Vagina (tissue), 2 donors: ENCODE measurements at regions of chr3 and their contacts with region 1.

Region 1: DNA sequence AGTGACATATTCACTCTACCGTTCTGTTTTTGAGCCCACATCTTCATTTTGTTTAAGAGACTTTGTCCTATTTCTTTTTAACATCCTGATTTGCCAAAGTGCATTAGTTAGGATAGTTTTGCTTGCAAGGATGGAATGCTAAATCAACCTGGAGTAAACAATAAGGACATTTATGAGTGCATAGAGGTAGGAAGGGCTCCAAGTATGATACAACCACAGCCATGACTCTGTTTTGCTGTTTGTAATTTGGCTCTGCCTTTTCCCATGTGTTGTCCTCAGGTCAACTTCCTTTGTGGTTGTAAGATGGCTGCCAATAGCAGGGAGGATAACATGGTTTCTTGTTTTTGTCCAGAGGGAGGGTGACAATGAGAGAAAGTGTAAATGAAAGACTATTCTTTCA is 66.4 kb upstream of the GOLIM4 start:
- DNase-seq: no peak
- H3K4me3 ChIP-seq: no peak overlapping the region
- H3K27ac ChIP-seq: peak overlapping the region; percentile 28
- H3K4me1 ChIP-seq: peaks cover 14% of the 10 kb centered on the region
- H3K27me3 ChIP-seq: no peaks in the 10 kb centered on the region
- CTCF ChIP-seq: no peak
- POLR2A ChIP-seq: no peak

Region 2: DNA sequence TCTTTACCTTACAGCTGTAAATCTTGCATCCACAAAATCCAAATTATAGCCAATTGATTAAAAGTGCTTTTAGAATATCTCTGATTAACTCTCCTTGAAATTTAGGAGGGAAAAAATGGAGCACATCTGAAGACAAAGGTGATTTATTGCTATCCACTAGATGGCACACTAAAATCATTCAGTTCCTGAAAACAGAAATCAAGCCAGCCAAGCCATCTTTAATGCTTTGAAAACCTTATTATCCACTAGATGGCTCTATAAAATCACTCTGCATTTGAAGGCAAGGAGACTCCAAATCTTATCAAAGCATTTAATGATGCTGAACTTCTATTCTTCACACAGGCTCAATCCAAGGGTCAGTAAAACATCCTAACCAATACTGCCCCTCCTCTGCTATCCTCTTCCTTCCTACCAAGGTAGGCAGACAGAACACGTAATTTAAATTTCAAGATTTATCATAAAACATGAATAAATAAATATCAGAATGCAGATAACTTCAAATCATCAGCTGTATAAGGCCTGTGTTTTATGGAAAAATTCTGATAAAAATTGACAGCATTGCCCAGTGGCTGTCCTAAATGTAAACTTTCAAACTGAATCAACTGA is 114.9 kb before region 1 on chr3:
- intact Hi-C with region 1: loop called (anchors 5 kb)
- DNase-seq: no peak
- H3K4me3 ChIP-seq: no peak overlapping the region
- H3K27ac ChIP-seq: no peak overlapping the region
- H3K4me1 ChIP-seq: peaks cover 17% of the 10 kb centered on the region
- H3K27me3 ChIP-seq: no peaks in the 10 kb centered on the region
- CTCF ChIP-seq: peak; percentile 83 to 87 (median 84)
- POLR2A ChIP-seq: no peak

Region 3: GRCh38 chr3:168095611-168096209 is 66.5 kb before region 1 on chr3 and contains the start of gene GOLIM4:
- intact Hi-C with region 1: loop called (anchors 5 kb)
- DNase-seq: peak in 1 of 2 donors; percentile 97
- H3K4me3 ChIP-seq: peak within 1 kb of the TSS; percentile 67 to 82
- H3K27ac ChIP-seq: peak within 1 kb of the TSS; percentile 85
- H3K4me1 ChIP-seq: peaks cover 44% of the 10 kb centered on the region
- H3K27me3 ChIP-seq: no peaks in the 10 kb centered on the region
- CTCF ChIP-seq: no peak
- POLR2A ChIP-seq: peak in 1 of 2 donors; percentile 48
- total RNA-seq, gene GOLIM4: 36.8 TPM

Region 4: GRCh38 chr3:168249550-168250414 is 87.6 kb after region 1 on chr3:
- intact Hi-C with region 1: no loop called
- DNase-seq: no peak
- H3K4me3 ChIP-seq: peak overlapping the region; percentile 49 to 66
- H3K27ac ChIP-seq: no peak overlapping the region
- H3K4me1 ChIP-seq: peaks cover 25% of the 10 kb centered on the region
- H3K27me3 ChIP-seq: no peaks in the 10 kb centered on the region
- CTCF ChIP-seq: no peak
- POLR2A ChIP-seq: no peak

Region 5: DNA sequence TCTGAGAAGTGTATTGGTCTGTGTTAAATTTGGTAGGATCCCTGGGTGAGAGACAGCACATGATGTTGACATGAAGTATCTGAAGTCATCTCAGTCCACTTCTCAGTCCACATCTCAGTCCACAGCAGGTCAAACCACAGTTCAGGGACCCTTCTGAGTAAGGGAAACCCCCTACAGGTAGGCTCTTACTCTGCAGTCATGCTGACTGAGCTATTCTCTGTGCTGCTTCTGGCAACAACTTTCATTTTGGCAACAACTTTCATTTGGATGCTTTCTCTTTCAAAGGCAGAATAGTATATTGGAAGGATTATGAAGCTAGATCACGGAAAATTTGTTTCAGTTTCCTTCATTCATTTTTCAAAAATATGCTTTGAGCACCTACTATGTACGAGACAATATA is 111.7 kb after region 1 on chr3:
- intact Hi-C with region 1: no loop called
- DNase-seq: no peak
- H3K4me3 ChIP-seq: no peak overlapping the region
- H3K27ac ChIP-seq: no peak overlapping the region
- H3K4me1 ChIP-seq: no peaks in the 10 kb centered on the region
- H3K27me3 ChIP-seq: no peaks in the 10 kb centered on the region
- CTCF ChIP-seq: no peak
- POLR2A ChIP-seq: no peak